Posterior vena cava (tissue), 2 donors: ENCODE measurements at regions of chrX and their contacts with region 1.

Region 1: GRCh38 chrX:2640275-2641150 is 50.6 kb upstream of the CD99 start:
- DNase-seq: no peak

Region 2: DNA sequence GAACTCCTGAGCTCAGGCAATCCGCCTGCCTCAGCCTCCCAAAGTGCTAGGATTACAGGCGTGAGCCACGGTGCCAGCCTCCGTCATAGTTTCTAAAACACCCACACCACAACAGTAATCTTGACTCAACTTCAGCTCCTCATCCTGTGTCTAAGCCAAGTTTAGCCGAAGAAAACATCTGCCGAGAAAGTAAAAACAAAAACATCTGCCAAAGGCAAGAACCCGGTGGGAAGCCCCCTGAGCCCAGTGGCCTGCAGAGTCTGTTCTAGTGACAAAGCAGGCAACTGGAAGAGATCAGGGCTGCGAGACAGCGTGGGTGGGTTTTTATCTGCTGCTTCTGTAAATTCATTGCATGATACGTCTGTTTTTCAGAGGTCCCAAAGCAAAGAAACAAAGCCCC is 24.0 kb after region 1 on chrX:
- intact Hi-C with region 1: no loop called
- DNase-seq: peak; percentile 81

Region 3: GRCh38 chrX:2819345-2820135 is 179.0 kb after region 1 on chrX:
- intact Hi-C with region 1: loop called in 1 of 2 experiments (anchors 10 kb)
- DNase-seq: peak; percentile 52

Region 4: DNA sequence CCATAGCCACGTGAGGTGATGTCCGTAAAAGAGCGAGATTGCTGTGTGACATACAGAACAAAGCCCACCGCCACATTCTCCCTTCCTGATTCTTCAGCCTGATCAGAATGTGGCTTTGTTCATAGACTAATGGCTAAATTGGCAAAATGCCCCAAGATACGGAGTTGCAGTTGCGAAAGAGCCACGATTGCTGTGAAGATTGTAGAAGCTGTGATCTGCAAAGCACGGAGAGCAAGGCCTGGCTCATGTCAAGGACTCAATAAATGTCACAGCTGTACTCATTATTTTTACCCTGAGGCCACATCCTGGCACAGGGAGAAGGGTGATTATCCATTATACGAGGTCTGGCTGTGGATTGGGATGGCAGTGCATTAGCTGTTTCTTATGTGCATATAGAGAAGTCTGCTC is 254.4 kb after region 1 on chrX:
- intact Hi-C with region 1: no loop called
- DNase-seq: peak; percentile 36